ENCODE measurements at regions of chr15 and their contacts with region 1.

Region 1: DNA sequence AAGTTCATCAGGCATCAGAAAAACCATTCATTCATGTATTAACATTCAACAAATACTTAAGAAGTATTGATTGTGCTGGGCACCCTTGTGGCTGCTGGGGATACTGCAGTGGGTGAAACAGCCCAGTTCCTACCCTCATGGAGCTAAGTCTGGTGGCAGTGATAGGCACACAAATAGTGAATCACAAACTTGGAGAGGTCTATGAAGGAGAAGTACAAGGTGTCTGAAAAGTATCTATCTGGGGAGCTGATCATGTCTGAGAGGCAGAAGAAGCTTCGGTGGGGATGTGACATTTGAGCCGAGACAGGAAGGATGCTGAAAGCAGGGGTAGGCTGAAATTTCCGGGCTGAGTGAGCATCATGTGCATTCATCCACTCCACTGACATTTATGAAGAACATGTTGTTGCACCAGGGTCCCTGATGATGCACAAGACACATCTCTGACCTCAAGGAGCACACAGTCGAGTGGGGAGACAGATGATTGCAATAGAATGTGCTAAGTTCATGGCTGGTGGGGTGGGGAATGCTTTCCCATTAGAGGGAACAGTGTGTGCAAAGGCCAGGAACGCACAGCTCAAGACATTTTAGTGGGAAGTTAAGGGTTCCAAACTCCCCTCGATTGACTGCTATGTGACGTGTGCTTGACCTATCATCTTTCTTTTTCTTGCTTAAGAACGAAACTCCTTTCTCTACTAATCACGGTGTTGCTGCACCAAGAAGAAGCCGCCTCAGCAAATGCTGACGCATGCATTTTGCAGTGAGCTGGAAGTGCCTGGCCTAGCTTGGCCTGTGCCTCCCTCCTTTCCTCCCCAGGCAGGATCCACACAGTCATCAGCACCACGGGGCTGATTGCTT is 309.1 kb upstream of the ICE2 start:
- DNase-seq: no peak
- H3K4me3 ChIP-seq: no peak overlapping the region
- H3K27ac ChIP-seq: no peak overlapping the region
- H3K4me1 ChIP-seq: peaks cover 0 to 4% (median 1%) of the 10 kb centered on the region in 4 experiments; a peak in 3 of 7 replicates
- H3K27me3 ChIP-seq: no peaks in the 10 kb centered on the region
- CTCF ChIP-seq: peak; percentile 38 to 77 (median 62)
- EP300 ChIP-seq: no peak
- POLR2A ChIP-seq: no peak
- RAD21 ChIP-seq: peak; percentile 43 to 47; a peak in 3 of 4 replicates

Region 2: DNA sequence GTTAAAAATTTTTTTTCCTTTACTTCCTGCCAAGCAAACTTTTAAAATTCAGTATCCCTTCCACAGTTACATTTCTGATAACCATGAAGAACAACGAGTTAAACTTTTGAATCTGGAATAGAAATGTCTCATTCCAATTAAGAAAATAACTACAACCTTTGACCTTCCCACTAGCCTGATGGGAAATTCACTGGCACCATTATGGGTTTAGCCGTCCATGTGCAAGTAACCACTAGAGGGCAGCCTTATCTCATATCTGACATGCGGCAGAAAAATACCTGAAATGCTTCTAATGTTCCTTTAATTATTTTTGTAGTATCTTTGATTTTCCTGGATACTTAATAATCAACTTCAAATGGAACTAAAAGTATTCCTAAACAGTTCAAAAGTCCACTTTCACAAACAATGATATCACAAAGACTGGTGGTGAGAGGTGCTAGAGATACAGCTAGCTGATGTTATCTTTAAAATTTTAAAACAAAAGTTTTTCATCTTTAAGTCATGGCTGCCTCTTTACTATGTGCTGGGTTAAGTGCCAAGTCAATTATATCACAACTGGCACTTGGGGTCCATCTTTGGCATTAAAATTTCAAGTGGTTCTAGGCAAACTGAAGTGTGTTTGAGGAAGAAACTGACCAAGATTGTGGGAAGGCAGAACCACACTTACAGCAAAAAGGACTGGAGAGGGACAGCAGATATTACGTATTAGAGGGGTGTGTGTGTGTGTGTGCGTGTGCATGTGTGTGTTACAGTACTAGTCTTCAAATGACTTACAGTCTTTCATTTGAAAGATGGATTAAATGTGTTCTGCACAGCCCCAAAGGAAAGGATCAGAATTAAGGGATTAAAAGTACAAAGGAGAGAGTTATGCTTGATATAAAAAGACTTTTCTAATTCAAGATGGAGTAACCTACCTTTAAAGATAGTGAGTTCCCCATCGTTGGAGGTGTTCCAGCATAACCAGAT is 202.0 kb before region 1 on chr15:
- CTCF ChIA-PET with region 1: interaction called, 14 read pairs
- POLR2A ChIA-PET with region 1: no interaction called
- DNase-seq: no peak
- H3K4me3 ChIP-seq: no peak overlapping the region
- H3K27ac ChIP-seq: no peak overlapping the region
- H3K4me1 ChIP-seq: peaks cover 0 to 5% (median 2%) of the 10 kb centered on the region in 4 experiments; a peak in 4 of 7 replicates
- H3K27me3 ChIP-seq: peaks cover 0 to 7% (median 0%) of the 10 kb centered on the region in 4 experiments; a peak in 2 of 7 replicates
- CTCF ChIP-seq: peak; percentile 10 to 78 (median 78)
- EP300 ChIP-seq: no peak
- POLR2A ChIP-seq: no peak
- RAD21 ChIP-seq: peak; percentile 89 to 90

Region 3: DNA sequence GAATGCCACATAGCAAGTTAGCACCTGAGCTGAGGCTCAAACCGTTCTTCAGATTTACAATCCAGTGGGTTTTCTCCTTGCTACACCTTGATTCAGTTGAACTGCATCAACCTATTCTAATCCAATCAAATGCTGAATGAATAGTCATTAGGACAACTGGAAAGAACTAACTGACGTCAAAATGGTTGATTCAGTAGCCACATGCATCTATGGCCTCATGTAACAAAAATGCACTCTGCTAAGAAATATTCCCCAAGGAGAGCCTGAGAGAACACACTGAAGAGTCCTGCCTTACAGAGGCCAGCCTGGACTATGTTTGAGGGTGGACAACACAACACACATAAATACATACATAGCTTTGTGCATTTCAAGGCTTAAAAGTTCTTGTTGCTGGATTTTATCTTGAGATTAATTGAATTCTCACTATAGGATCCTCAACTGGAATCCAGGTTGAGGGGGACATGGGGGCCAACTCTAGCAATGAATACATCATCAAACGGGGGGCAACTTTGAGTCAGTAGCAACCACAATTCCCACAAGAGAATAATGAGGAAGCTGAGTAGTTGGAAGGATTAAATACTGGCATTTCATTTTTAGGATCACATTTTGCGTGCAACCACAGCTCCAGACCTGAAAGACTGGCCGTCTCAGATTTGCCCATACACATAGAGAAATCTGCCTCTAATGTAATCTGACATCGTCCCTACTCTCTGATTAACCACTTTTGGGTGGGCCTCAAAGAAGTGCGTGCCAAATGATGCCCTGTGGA is 28.9 kb before region 1 on chr15:
- CTCF ChIA-PET with region 1: interaction called, 18 read pairs
- POLR2A ChIA-PET with region 1: no interaction called
- DNase-seq: no peak
- H3K4me3 ChIP-seq: no peak overlapping the region
- H3K27ac ChIP-seq: no peak overlapping the region
- H3K4me1 ChIP-seq: peaks cover 0 to 3% (median 0%) of the 10 kb centered on the region in 4 experiments; a peak in 5 of 7 replicates
- H3K27me3 ChIP-seq: peaks cover 0 to 3% (median 0%) of the 10 kb centered on the region in 4 experiments; a peak in 1 of 7 replicates
- CTCF ChIP-seq: no peak
- EP300 ChIP-seq: no peak
- POLR2A ChIP-seq: no peak
- RAD21 ChIP-seq: no peak

Region 4: GRCh38 chr15:60772395-60773120 is 15.5 kb before region 1 on chr15:
- CTCF ChIA-PET with region 1: interaction called, 38 read pairs
- POLR2A ChIA-PET with region 1: no interaction called
- DNase-seq: no peak
- H3K4me3 ChIP-seq: no peak overlapping the region
- H3K27ac ChIP-seq: no peak overlapping the region
- H3K4me1 ChIP-seq: peaks cover 0 to 4% (median 3%) of the 10 kb centered on the region in 4 experiments; a peak in 4 of 7 replicates
- H3K27me3 ChIP-seq: no peaks in the 10 kb centered on the region
- CTCF ChIP-seq: no peak
- EP300 ChIP-seq: no peak
- POLR2A ChIP-seq: no peak
- RAD21 ChIP-seq: no peak

Region 5: DNA sequence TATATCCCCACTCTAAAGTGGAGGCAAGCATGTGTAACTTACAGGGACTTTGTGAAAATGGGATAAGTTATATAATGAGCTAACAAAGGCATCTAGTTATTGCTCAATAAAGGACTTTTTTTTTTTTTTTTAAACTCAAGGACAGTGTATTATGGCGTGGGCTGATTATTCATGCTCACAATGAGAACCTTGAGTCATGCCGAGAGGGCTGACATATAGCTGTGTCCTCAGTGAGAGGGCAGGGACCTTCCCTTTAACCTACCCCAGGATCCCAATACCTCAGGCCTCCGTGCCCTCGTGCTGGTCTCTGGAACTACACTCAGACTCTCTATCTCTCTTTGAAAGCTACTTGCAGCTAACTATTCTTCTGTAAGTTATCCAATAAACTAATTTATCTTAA is 10.8 kb after region 1 on chr15:
- CTCF ChIA-PET with region 1: interaction called, 71 read pairs
- POLR2A ChIA-PET with region 1: no interaction called
- DNase-seq: no peak
- H3K4me3 ChIP-seq: no peak overlapping the region
- H3K27ac ChIP-seq: no peak overlapping the region
- H3K4me1 ChIP-seq: peaks cover 0 to 11% (median 1%) of the 10 kb centered on the region in 4 experiments; a peak in 3 of 7 replicates
- H3K27me3 ChIP-seq: no peaks in the 10 kb centered on the region
- CTCF ChIP-seq: no peak
- EP300 ChIP-seq: no peak
- POLR2A ChIP-seq: no peak
- RAD21 ChIP-seq: no peak

Region 6: GRCh38 chr15:60865507-60865906 is 77.4 kb after region 1 on chr15:
- CTCF ChIA-PET with region 1: interaction called, 10 read pairs
- POLR2A ChIA-PET with region 1: interaction called, 3 read pairs
- DNase-seq: no peak
- H3K4me3 ChIP-seq: no peak overlapping the region
- H3K27ac ChIP-seq: no peak overlapping the region
- H3K4me1 ChIP-seq: no peaks in the 10 kb centered on the region
- H3K27me3 ChIP-seq: no peaks in the 10 kb centered on the region
- CTCF ChIP-seq: no peak
- EP300 ChIP-seq: no peak
- POLR2A ChIP-seq: no peak
- RAD21 ChIP-seq: no peak

Region 7: GRCh38 chr15:60922736-60923135 is 134.7 kb after region 1 on chr15:
- CTCF ChIA-PET with region 1: no interaction called
- POLR2A ChIA-PET with region 1: no interaction called
- DNase-seq: no peak
- H3K4me3 ChIP-seq: no peak overlapping the region
- H3K27ac ChIP-seq: no peak overlapping the region
- H3K4me1 ChIP-seq: peaks cover 0 to 3% (median 2%) of the 10 kb centered on the region in 4 experiments; a peak in 2 of 7 replicates
- H3K27me3 ChIP-seq: no peaks in the 10 kb centered on the region
- CTCF ChIP-seq: no peak
- EP300 ChIP-seq: no peak
- POLR2A ChIP-seq: no peak
- RAD21 ChIP-seq: no peak